PC-9 (cell line): ENCODE measurements at regions of chr14 and their contacts with region 1.

Region 1: GRCh38 chr14:24079491-24080141 is 8.3 kb downstream of the CPNE6 start:
- DNase-seq: no peak
- H3K4me3 ChIP-seq: no peak overlapping the region
- H3K27ac ChIP-seq: no peak overlapping the region
- H3K4me1 ChIP-seq: peaks cover 10% of the 10 kb centered on the region; the same call in 1 of the 2 replicates
- H3K27me3 ChIP-seq: no peaks in the 10 kb centered on the region
- CTCF ChIP-seq: no peak

Region 2: DNA sequence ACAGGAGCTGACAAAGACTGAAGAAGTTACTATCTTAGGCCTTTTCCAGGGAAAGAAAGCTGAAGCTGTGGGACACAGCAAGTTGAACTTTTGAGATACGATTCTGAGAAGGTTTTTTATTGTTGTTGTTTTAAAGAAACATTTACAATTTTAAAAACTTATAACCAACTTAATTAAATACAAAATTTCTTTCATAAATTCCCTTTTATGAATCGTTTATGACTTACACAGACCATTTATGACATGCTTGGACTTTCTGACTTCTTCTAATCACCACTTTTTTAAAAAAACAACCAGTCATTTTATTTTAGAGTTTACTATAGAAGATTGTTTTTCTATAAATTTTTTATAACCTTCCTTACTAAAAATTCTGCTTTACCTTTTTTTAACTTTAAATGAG is 374.7 kb before region 1 on chr14:
- CTCF ChIA-PET with region 1: no interaction called
- POLR2A ChIA-PET with region 1: no interaction called
- intact Hi-C with region 1: no loop called
- DNase-seq: no peak
- H3K4me3 ChIP-seq: no peak overlapping the region
- H3K27ac ChIP-seq: no peak overlapping the region
- H3K4me1 ChIP-seq: no peaks in the 10 kb centered on the region
- H3K27me3 ChIP-seq: no peaks in the 10 kb centered on the region
- CTCF ChIP-seq: no peak

Region 3: GRCh38 chr14:23877538-23878180 is 202.0 kb before region 1 on chr14:
- CTCF ChIA-PET with region 1: no interaction called
- POLR2A ChIA-PET with region 1: no interaction called
- intact Hi-C with region 1: no loop called
- DNase-seq: no peak
- H3K4me3 ChIP-seq: no peak overlapping the region
- H3K27ac ChIP-seq: no peak overlapping the region
- H3K4me1 ChIP-seq: no peaks in the 10 kb centered on the region
- H3K27me3 ChIP-seq: no peaks in the 10 kb centered on the region
- CTCF ChIP-seq: no peak

Region 4: DNA sequence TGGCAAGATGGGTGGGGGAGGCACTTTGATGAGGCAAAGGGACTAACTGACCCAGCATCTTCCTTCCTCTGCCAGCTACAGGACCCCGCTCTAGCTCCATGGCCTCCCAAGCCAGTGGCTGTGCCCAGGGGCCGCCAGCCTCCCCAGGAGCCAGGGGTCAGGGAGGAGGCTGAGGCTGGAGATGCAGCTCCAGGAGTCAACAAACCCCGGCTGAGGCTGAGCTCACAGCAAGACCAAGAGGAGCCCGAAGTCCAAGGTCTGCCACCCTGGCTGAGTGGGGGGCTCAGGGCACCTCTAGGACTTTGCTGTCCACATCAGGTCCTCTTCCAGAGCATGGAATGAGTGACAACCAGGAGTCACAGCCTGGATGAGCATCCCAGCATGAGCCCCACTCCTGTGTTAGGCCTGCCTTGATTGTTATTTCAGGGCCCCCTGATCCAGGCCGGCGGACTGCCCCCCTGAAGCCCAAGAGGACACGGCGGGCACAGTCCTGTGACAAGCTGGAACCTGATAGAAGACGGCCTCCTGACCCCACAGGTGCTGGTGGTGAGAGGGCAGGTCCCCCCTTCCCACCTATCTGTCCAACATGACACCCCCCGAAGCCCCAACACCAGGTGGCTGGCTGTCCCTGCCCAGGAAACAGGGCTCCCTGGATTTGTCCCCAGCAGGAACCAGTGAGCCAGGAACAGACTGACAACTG is 10.8 kb before region 1 on chr14:
- CTCF ChIA-PET with region 1: interaction called, 11 read pairs
- POLR2A ChIA-PET with region 1: no interaction called
- intact Hi-C with region 1: no loop called
- DNase-seq: no peak
- H3K4me3 ChIP-seq: no peak overlapping the region
- H3K27ac ChIP-seq: no peak overlapping the region
- H3K4me1 ChIP-seq: no peaks in the 10 kb centered on the region
- H3K27me3 ChIP-seq: peaks cover 13% of the 10 kb centered on the region
- CTCF ChIP-seq: no peak